ENCODE measurements at regions of chr17 and their contacts with region 1.

Region 1: DNA sequence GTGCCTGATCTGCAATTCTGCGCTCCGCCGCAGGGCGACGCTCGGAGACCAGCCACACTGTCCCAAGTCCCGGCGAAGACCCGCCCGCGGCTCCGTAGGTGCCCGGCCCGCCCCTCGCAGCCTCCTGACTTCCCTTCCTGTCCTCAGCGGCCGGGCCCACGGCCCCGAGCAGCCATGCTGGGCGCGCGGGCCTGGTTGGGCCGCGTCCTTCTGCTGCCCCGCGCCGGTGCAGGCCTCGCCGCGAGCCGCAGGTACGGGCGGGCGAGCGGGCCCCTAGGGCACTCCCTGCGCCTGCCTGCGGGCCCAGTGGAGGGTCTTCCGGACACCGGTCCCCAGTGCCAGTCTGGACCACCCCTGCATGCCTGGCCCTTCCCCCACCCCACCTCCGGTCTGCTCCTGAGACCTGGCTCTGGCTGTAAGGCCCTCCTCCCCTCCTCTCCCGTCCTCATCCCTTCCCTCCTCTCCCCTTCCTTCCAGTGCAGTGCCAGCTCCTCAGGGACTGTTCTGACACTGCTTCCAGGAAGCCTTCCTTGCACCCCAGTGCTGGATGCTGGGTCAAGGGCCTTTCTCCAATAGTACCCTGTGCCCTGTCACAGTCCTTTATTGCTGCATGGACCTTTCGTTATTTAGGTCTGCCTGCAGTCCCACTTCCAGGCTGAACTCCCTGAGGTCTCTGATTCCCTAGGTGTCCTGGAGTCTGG is at the start of gene SPATA20:
- DNase-seq: peak; percentile 95
- H3K4me3 ChIP-seq: peak within 1 kb of the TSS; percentile 23 to 65 (median 56)
- H3K27ac ChIP-seq: peak within 1 kb of the TSS; percentile 85 to 91 (median 90)
- H3K4me1 ChIP-seq: peaks cover 11 to 46% (median 33%) of the 10 kb centered on the region in 4 donors
- H3K27me3 ChIP-seq: no peaks in the 10 kb centered on the region
- CTCF ChIP-seq: peak; percentile 96 to 99 (median 98)
- EP300 ChIP-seq: no peak
- POLR2A ChIP-seq: peak; percentile 82
- total RNA-seq, gene SPATA20: 116 to 437 (median 228) TPM

Region 2: DNA sequence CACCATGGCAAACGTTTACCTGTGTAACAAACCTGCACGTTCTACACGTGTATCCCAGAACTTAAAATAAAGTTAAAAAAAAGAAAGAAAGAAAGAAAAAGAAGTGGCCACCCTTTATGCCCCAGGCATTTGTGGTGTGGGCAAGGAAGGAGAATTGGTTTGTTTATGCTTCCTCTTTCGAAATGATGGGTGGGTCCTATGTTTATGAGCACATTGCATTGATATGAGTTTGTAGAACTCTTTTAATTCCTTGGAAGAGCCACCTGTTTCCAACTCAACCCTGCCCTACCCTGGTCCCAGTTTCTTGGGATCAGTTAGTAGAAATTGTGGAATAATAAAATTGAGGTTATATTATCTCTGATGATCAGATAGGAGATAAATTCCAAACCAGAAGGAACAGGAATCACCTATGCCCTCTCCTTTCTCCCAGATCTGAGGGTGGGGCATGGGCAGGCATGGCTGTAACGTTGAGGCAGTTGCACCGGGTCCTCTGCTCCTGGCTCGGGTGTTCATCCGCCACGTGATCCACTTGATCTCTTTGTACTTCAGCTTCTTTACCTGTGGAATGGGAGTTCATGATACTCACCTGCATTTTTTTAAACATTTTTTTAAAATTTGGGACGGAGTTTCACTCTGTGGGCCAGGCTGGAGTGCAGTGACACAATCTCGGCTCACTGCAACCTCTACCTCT is 94.4 kb before region 1 on chr17:
- in situ Hi-C with region 1: no loop called
- intact Hi-C with region 1: no loop called
- DNase-seq: peak; percentile 82
- H3K4me3 ChIP-seq: no peak overlapping the region
- H3K27ac ChIP-seq: peak overlapping the region; percentile 82 to 86 (median 84)
- H3K4me1 ChIP-seq: peaks cover 7 to 76% (median 39%) of the 10 kb centered on the region in 4 donors
- H3K27me3 ChIP-seq: no peaks in the 10 kb centered on the region
- CTCF ChIP-seq: no peak
- EP300 ChIP-seq: no peak
- POLR2A ChIP-seq: no peak

Region 3: GRCh38 chr17:50626037-50626574 is 78.9 kb after region 1 on chr17:
- in situ Hi-C with region 1: loop called in 2 of 4 experiments (anchors 10 kb)
- intact Hi-C with region 1: loop called (anchors 5 kb)
- DNase-seq: peak; percentile 71
- H3K4me3 ChIP-seq: no peak overlapping the region
- H3K27ac ChIP-seq: no peak overlapping the region
- H3K4me1 ChIP-seq: peaks cover 3 to 39% (median 28%) of the 10 kb centered on the region in 4 donors
- H3K27me3 ChIP-seq: peaks cover 3% of the 10 kb centered on the region
- CTCF ChIP-seq: peak; percentile 46 to 73 (median 58)
- EP300 ChIP-seq: no peak
- POLR2A ChIP-seq: no peak

Region 4: DNA sequence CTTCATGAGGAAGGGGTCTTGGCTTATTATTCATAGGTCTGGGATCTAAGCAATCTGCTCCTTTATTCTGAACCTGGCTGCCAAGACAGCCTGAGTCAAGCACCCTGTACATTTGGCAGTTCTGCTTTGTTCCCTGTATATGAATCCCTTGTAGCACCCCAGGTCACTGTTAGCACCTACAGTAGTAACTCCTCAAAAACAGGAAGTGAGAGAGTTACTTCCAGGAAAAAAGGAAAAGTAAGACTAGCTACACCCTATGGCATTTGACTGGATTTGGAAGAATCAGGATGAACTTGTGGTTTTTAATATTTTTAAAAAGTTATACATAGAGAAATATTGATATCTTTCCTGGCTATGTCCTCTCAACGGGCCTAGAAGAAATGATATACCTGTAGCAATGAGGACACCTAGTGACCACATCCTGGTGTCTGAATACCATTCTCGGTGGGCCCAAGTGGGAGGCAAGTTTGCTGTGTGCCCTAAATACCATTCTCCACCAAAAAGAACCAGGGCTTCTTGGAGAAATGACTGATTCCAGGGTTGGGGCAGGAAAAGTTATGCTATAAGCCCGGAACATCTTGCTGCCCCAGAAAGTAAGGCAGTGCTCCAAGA is 150.6 kb after region 1 on chr17:
- in situ Hi-C with region 1: loop called (anchors 10 kb)
- intact Hi-C with region 1: loop called (anchors 5 kb)
- DNase-seq: no peak
- H3K4me3 ChIP-seq: no peak overlapping the region
- H3K27ac ChIP-seq: peak overlapping the region; percentile 2 to 88 (median 68)
- H3K4me1 ChIP-seq: peaks cover 25 to 49% (median 30%) of the 10 kb centered on the region in 4 donors
- H3K27me3 ChIP-seq: no peaks in the 10 kb centered on the region
- CTCF ChIP-seq: peak in 4 of 5 experiments; percentile 14 to 41 (median 24)
- EP300 ChIP-seq: no peak
- POLR2A ChIP-seq: no peak

Region 5: DNA sequence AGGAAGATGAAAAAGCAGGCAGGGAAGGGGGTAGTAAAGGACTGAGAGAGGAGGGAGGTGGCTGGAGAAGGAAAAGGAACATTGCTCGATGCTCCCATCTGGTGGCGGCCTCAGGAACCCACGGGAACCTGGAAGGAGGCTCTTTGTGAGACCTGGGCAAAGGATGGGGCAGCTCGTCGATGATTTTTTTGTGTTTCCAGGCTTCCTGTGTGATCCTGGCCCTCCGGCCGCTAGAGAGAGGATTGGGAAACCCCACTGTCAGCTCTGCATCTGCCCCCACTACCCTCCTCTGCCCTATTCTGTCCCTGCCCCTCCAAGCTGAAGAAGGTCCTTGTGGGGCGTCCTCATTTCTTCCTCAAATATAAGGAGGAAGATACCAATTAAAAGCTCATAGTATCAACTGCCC is 294.8 kb after region 1 on chr17:
- in situ Hi-C with region 1: loop called (anchors 10 to 25 kb)
- intact Hi-C with region 1: loop called (anchors 5 kb)
- DNase-seq: peak; percentile 82
- H3K4me3 ChIP-seq: no peak overlapping the region
- H3K27ac ChIP-seq: no peak overlapping the region
- H3K4me1 ChIP-seq: no peaks in the 10 kb centered on the region
- H3K27me3 ChIP-seq: no peaks in the 10 kb centered on the region
- CTCF ChIP-seq: peak; percentile 70 to 90 (median 80)
- EP300 ChIP-seq: no peak
- POLR2A ChIP-seq: no peak